ENCODE measurements at regions of chrX and their contacts with region 1.

Region 1: DNA sequence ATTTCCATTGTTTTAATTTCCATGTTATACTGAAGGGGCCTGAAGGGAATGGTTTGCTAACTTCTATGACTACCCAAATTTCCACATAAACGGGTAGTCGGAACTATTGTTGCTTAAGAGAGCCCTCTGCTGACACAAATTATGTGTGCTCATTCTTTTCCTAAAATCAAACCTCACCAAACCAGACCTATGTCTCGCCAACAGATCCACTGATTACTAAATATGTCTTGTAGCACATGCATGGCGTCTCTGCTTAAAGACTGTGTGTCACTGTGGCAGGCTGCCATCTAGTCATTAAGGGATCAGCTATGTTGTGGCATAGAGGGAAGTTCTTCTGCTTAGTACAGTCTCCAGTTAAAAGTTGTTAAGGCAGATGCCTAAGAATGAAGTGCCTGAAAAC is 25.1 kb downstream of the PIR start:
- DNase-seq: peak in 1 of 6 donors; percentile 10
- ATAC-seq: peak; percentile 56 to 83 (median 76)
- H3K4me3 ChIP-seq: no peak overlapping the region
- H3K27ac ChIP-seq: no peak overlapping the region
- H3K4me1 ChIP-seq: no peaks in the 10 kb centered on the region
- H3K27me3 ChIP-seq: peaks cover 0 to 14% (median 3%) of the 10 kb centered on the region in 4 donors
- CTCF ChIP-seq: peak in 1 of 4 donors; percentile 25

Region 2: GRCh38 chrX:15349046-15349445 is 119.0 kb before region 1 on chrX:
- intact Hi-C with region 1: loop called in 2 of 3 experiments (anchors 5 kb)
- DNase-seq: peak in 4 of 6 donors; percentile 19 to 44 (median 30)
- ATAC-seq: peak; percentile 77 to 97 (median 94)
- H3K4me3 ChIP-seq: no peak overlapping the region
- H3K27ac ChIP-seq: no peak overlapping the region
- H3K4me1 ChIP-seq: no peaks in the 10 kb centered on the region
- H3K27me3 ChIP-seq: no peaks in the 10 kb centered on the region
- CTCF ChIP-seq: peak in 3 of 4 donors; percentile 11 to 42 (median 37)

Region 3: DNA sequence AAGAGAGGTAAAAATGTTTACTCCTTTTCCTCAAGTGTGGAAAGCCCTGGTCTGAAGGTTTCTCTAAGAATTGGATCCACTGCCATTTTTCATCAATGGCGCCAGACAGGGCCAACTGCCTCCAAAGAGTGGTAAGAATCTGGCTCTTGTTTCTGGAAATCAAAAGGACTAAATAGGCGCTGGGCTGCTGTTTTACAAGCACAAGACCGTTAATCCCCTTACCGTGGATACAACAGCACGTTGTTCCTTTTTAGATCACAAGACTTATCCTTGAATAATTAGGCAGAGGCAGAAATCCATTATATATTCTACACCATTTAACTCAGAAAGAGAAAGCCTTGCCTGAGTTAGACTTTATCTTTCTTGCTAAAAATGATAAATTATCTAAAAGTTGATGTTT is 185.9 kb after region 1 on chrX:
- intact Hi-C with region 1: no loop called
- DNase-seq: no peak
- ATAC-seq: no peak
- H3K4me3 ChIP-seq: no peak overlapping the region
- H3K27ac ChIP-seq: no peak overlapping the region
- H3K4me1 ChIP-seq: no peaks in the 10 kb centered on the region
- H3K27me3 ChIP-seq: peaks cover 0 to 12% (median 0%) of the 10 kb centered on the region in 4 donors
- CTCF ChIP-seq: no peak

Measured in pancreas (tissue), 10 donors.